ENCODE measurements at regions of chr19 and their contacts with region 1.

Region 1: GRCh38 chr19:1490311-1491113 is at the start of gene PCSK4:
- DNase-seq: peak; percentile 99
- H3K4me3 Mint-ChIP-seq: peak within 1 kb of the TSS; percentile 76
- H3K27ac Mint-ChIP-seq: peak within 1 kb of the TSS; percentile 52
- H3K4me1 Mint-ChIP-seq: peaks cover 13% of the 10 kb centered on the region
- H3K27me3 Mint-ChIP-seq: peaks cover 2% of the 10 kb centered on the region
- total RNA-seq, gene PCSK4: 1.5 to 2.7 TPM

Region 2: GRCh38 chr19:1455336-1456120 is 35.0 kb before region 1 on chr19:
- CTCF ChIA-PET with region 1: no interaction called
- POLR2A ChIA-PET with region 1: no interaction called
- intact Hi-C with region 1: loop called (anchors 5 kb)
- DNase-seq: peak; percentile 79
- H3K4me3 Mint-ChIP-seq: no peak overlapping the region
- H3K27ac Mint-ChIP-seq: peak overlapping the region; percentile 8
- H3K4me1 Mint-ChIP-seq: peaks cover 25% of the 10 kb centered on the region
- H3K27me3 Mint-ChIP-seq: peaks cover 54% of the 10 kb centered on the region

Region 3: GRCh38 chr19:1478934-1479707 is 11.4 kb before region 1 on chr19 and contains the start of gene C19orf25:
- CTCF ChIA-PET with region 1: no interaction called
- POLR2A ChIA-PET with region 1: no interaction called
- intact Hi-C with region 1: loop called (anchors 1 kb)
- DNase-seq: peak; percentile 96
- H3K4me3 Mint-ChIP-seq: peak within 1 kb of the TSS; percentile 97
- H3K27ac Mint-ChIP-seq: peak within 1 kb of the TSS; percentile 91
- H3K4me1 Mint-ChIP-seq: peaks cover 9% of the 10 kb centered on the region
- H3K27me3 Mint-ChIP-seq: no peaks in the 10 kb centered on the region
- total RNA-seq, gene C19orf25: 24.4 to 26.9 TPM

Region 4: DNA sequence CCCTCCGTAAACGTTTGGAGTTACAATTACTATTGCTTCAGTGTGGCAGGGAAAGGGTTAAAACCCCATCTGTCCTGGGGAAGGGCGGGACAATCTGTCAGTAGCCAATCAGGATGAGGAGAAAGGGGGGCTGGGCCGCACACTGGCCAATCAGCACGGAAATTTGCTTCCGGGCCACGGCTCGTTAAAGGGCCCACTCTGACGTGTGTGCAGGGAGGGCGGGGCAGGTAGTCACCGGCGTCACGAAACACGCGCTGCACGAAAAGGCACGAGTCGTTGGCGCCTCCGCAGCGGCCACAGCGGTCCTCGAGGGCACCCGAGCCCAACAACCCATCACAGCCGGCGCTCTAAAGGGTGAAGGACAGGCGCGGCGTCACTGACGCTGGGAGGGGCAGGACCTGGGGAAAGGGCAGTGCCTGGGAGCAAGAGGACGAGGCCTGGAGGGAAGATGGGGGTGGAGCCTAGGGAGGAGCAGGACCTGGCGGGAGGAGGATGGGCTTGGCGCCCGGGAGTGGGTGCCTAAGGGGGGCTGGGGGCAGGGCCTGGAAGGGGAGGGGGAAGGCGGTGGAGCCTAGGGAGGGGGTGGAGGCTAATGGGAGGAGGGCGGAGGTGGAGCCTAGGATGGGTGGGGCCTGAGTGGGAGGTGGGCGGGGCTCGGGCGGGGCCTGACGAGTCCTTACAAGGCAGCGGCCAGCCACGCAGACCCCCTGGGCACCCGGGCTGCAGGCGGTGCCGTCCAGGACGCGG is 17.4 kb after region 1 on chr19:
- CTCF ChIA-PET with region 1: interaction called, 14 read pairs
- POLR2A ChIA-PET with region 1: no interaction called
- intact Hi-C with region 1: loop called (anchors 2 kb)
- DNase-seq: peak; percentile 93
- H3K4me3 Mint-ChIP-seq: peak overlapping the region; percentile 74
- H3K27ac Mint-ChIP-seq: peak overlapping the region; percentile 74
- H3K4me1 Mint-ChIP-seq: peaks cover 13% of the 10 kb centered on the region
- H3K27me3 Mint-ChIP-seq: peaks cover 11% of the 10 kb centered on the region

Region 5: GRCh38 chr19:1533510-1534150 is 43.1 kb after region 1 on chr19:
- CTCF ChIA-PET with region 1: no interaction called
- POLR2A ChIA-PET with region 1: no interaction called
- intact Hi-C with region 1: no loop called
- DNase-seq: no peak
- H3K4me3 Mint-ChIP-seq: no peak overlapping the region
- H3K27ac Mint-ChIP-seq: no peak overlapping the region
- H3K4me1 Mint-ChIP-seq: no peaks in the 10 kb centered on the region
- H3K27me3 Mint-ChIP-seq: peaks cover 17% of the 10 kb centered on the region

Region 6: GRCh38 chr19:1935484-1936208 is 445.1 kb after region 1 on chr19:
- CTCF ChIA-PET with region 1: no interaction called
- POLR2A ChIA-PET with region 1: no interaction called
- intact Hi-C with region 1: no loop called
- DNase-seq: peak; percentile 45
- H3K4me3 Mint-ChIP-seq: no peak overlapping the region
- H3K27ac Mint-ChIP-seq: no peak overlapping the region
- H3K4me1 Mint-ChIP-seq: peaks cover 14% of the 10 kb centered on the region
- H3K27me3 Mint-ChIP-seq: no peaks in the 10 kb centered on the region

Measured in activated CD4-positive, alpha-beta memory T cell treated with anti-CD3 and anti-CD28 coated beads for 36 hours (primary cell).